ENCODE measurements at regions of chr2 and their contacts with region 1.

Region 1: GRCh38 chr2:206561962-206562361 is 80.3 kb upstream of the FAM237A start:
- DNase-seq: no peak
- ATAC-seq: no peak
- H3K4me3 ChIP-seq: no peak overlapping the region
- H3K4me3 Mint-ChIP-seq: no peak overlapping the region
- H3K27ac ChIP-seq: no peak overlapping the region
- H3K27ac Mint-ChIP-seq: no peak overlapping the region
- H3K4me1 ChIP-seq: peaks cover 5% of the 10 kb centered on the region
- H3K4me1 Mint-ChIP-seq: peaks cover 32% of the 10 kb centered on the region
- H3K27me3 ChIP-seq: no peaks in the 10 kb centered on the region
- H3K27me3 Mint-ChIP-seq: no peaks in the 10 kb centered on the region
- CTCF ChIP-seq: no peak

Region 2: GRCh38 chr2:206502729-206503128 is 59.2 kb before region 1 on chr2:
- CTCF ChIA-PET with region 1: no interaction called
- POLR2A ChIA-PET with region 1: no interaction called
- intact Hi-C with region 1: no loop called
- DNase-seq: no peak
- ATAC-seq: peak; percentile 61
- H3K4me3 ChIP-seq: no peak overlapping the region
- H3K4me3 Mint-ChIP-seq: no peak overlapping the region
- H3K27ac ChIP-seq: no peak overlapping the region
- H3K27ac Mint-ChIP-seq: no peak overlapping the region
- H3K4me1 ChIP-seq: no peaks in the 10 kb centered on the region
- H3K4me1 Mint-ChIP-seq: peaks cover 6% of the 10 kb centered on the region
- H3K27me3 ChIP-seq: no peaks in the 10 kb centered on the region
- H3K27me3 Mint-ChIP-seq: no peaks in the 10 kb centered on the region
- CTCF ChIP-seq: peak; percentile 21

Region 3: DNA sequence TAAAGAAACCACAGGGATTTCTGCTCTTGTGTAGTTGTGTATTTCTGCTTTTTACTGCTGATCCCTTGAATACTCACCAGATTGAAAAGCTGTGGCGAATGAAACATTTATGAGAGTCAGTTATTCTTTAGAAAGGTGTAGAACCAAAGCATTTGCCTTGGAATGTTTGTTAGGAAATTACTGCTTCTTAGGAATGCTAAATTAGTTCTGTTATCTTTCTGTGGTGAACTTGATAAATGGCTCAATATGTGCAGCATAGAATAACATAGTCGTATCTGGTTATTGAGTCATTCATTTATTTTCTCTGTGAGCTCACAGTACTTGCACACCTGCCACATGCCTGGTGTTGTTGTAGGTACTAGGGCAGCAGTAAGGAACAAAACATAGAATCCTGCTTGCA is 23.4 kb after region 1 on chr2:
- CTCF ChIA-PET with region 1: no interaction called
- POLR2A ChIA-PET with region 1: no interaction called
- intact Hi-C with region 1: no loop called
- DNase-seq: no peak
- ATAC-seq: no peak
- H3K4me3 ChIP-seq: no peak overlapping the region
- H3K4me3 Mint-ChIP-seq: no peak overlapping the region
- H3K27ac ChIP-seq: no peak overlapping the region
- H3K27ac Mint-ChIP-seq: no peak overlapping the region
- H3K4me1 ChIP-seq: no peaks in the 10 kb centered on the region
- H3K4me1 Mint-ChIP-seq: no peaks in the 10 kb centered on the region
- H3K27me3 ChIP-seq: peaks cover 2 to 5% of the 10 kb centered on the region in 2 experiments
- H3K27me3 Mint-ChIP-seq: no peaks in the 10 kb centered on the region
- CTCF ChIP-seq: no peak

Region 4: GRCh38 chr2:206783718-206784117 is 221.8 kb after region 1 on chr2:
- CTCF ChIA-PET with region 1: no interaction called
- POLR2A ChIA-PET with region 1: no interaction called
- intact Hi-C with region 1: loop called (anchors 5 kb)
- DNase-seq: no peak
- ATAC-seq: no peak
- H3K4me3 ChIP-seq: no peak overlapping the region
- H3K4me3 Mint-ChIP-seq: no peak overlapping the region
- H3K27ac ChIP-seq: no peak overlapping the region
- H3K27ac Mint-ChIP-seq: no peak overlapping the region
- H3K4me1 ChIP-seq: no peaks in the 10 kb centered on the region
- H3K4me1 Mint-ChIP-seq: peaks cover 25% of the 10 kb centered on the region
- H3K27me3 ChIP-seq: no peaks in the 10 kb centered on the region
- H3K27me3 Mint-ChIP-seq: no peaks in the 10 kb centered on the region
- CTCF ChIP-seq: peak; percentile 23

Region 5: GRCh38 chr2:206937555-206937954 is 375.6 kb after region 1 on chr2:
- CTCF ChIA-PET with region 1: no interaction called
- POLR2A ChIA-PET with region 1: no interaction called
- intact Hi-C with region 1: no loop called
- DNase-seq: no peak
- ATAC-seq: no peak
- H3K4me3 ChIP-seq: no peak overlapping the region
- H3K4me3 Mint-ChIP-seq: no peak overlapping the region
- H3K27ac ChIP-seq: no peak overlapping the region
- H3K27ac Mint-ChIP-seq: no peak overlapping the region
- H3K4me1 ChIP-seq: no peaks in the 10 kb centered on the region
- H3K4me1 Mint-ChIP-seq: no peaks in the 10 kb centered on the region
- H3K27me3 ChIP-seq: no peaks in the 10 kb centered on the region
- H3K27me3 Mint-ChIP-seq: no peaks in the 10 kb centered on the region
- CTCF ChIP-seq: no peak

Measured in CD4-positive, alpha-beta T cell (primary cell).